Heart left ventricle (tissue), 16 donors: ENCODE measurements at regions of chrX and their contacts with region 1.

Region 1: GRCh38 chrX:77910108-77910840 is at the start of gene ATP7A:
- DNase-seq: peak; percentile 87 to 93 (median 91)
- ATAC-seq: peak; percentile 93 to 98 (median 97)
- H3K4me3 ChIP-seq: peak within 1 kb of the TSS; percentile 22 to 89 (median 65)
- H3K27ac ChIP-seq: peak within 1 kb of the TSS; percentile 59 to 90 (median 84)
- H3K4me1 ChIP-seq: peaks cover 0 to 20% (median 7%) of the 10 kb centered on the region in 12 donors
- H3K27me3 ChIP-seq: no peaks in the 10 kb centered on the region
- CTCF ChIP-seq: peak in 11 of 12 donors; percentile 35 to 65 (median 48)
- POLR2A ChIP-seq: peak in 1 of 2 donors; percentile 34
- total RNA-seq, gene ATP7A: 4.4 to 9.3 (median 5.8) TPM

Region 2: GRCh38 chrX:77949840-77950239 is 39.6 kb after region 1 on chrX:
- intact Hi-C with region 1: no loop called
- DNase-seq: no peak
- ATAC-seq: no peak
- H3K4me3 ChIP-seq: no peak overlapping the region
- H3K27ac ChIP-seq: no peak overlapping the region
- H3K4me1 ChIP-seq: peaks cover 0 to 13% (median 2%) of the 10 kb centered on the region in 12 donors
- H3K27me3 ChIP-seq: no peaks in the 10 kb centered on the region
- CTCF ChIP-seq: no peak
- POLR2A ChIP-seq: no peak

Region 3: GRCh38 chrX:78029663-78030062 is 119.4 kb after region 1 on chrX:
- intact Hi-C with region 1: loop called in 8 of 10 experiments (anchors 5 to 10 kb)
- DNase-seq: peak in 1 of 5 donors; percentile 6
- ATAC-seq: no peak
- H3K4me3 ChIP-seq: no peak overlapping the region
- H3K27ac ChIP-seq: no peak overlapping the region
- H3K4me1 ChIP-seq: no peaks in the 10 kb centered on the region
- H3K27me3 ChIP-seq: no peaks in the 10 kb centered on the region
- CTCF ChIP-seq: peak; percentile 15 to 47 (median 34)
- POLR2A ChIP-seq: no peak

Region 4: DNA sequence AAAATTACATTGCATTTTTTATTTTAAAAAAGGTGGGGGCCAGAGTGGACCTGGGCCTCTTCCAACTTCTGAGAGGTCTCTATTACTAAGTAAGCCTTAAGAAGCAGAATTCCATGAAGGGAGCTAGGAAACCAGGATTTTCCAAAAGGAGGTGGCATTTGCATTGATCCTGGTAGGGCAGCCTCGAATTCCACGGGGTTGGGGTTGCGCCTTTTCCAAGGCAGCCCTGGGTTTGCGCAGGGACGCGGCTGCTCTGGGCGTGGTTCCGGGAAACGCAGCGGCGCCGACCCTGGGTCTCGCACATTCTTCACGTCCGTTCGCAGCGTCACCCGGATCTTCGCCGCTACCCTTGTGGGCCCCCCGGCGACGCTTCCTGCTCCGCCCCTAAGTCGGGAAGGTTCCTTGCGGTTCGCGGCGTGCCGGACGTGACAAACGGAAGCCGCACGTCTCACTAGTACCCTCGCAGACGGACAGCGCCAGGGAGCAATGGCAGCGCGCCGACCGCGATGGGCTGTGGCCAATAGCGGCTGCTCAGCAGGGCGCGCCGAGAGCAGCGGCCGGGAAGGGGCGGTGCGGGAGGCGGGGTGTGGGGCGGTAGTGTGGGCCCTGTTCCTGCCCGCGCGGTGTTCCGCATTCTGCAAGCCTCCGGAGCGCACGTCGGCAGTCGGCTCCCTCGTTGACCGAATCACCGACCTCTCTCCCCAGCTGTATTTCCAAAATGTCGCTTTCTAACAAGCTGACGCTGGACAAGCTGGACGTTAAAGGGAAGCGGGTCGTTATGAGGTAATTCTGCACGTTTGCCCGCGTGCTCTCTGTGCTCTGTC is 193.6 kb after region 1 on chrX and contains the start of gene PGK1:
- intact Hi-C with region 1: loop called in 5 of 10 experiments (anchors 5 to 10 kb)
- DNase-seq: peak; percentile 95 to 98 (median 96)
- ATAC-seq: peak; percentile 96 to 98 (median 98)
- H3K4me3 ChIP-seq: peak within 1 kb of the TSS; percentile 38 to 96 (median 76)
- H3K27ac ChIP-seq: peak within 1 kb of the TSS; percentile 85 to 96 (median 92)
- H3K4me1 ChIP-seq: peaks cover 0 to 38% (median 30%) of the 10 kb centered on the region in 12 donors
- H3K27me3 ChIP-seq: no peaks in the 10 kb centered on the region
- CTCF ChIP-seq: no peak
- POLR2A ChIP-seq: peak; percentile 29 to 78
- total RNA-seq, gene PGK1: 291 to 616 (median 458) TPM

Region 5: GRCh38 chrX:78119521-78120227 is 209.4 kb after region 1 on chrX:
- intact Hi-C with region 1: loop called in 1 of 10 experiments (anchors 10 kb)
- DNase-seq: no peak
- ATAC-seq: no peak
- H3K4me3 ChIP-seq: no peak overlapping the region
- H3K27ac ChIP-seq: no peak overlapping the region
- H3K4me1 ChIP-seq: peaks cover 0 to 8% (median 0%) of the 10 kb centered on the region in 12 donors
- H3K27me3 ChIP-seq: no peaks in the 10 kb centered on the region
- CTCF ChIP-seq: peak in 5 of 12 donors; percentile 4 to 27 (median 17)
- POLR2A ChIP-seq: no peak